ENCODE measurements at regions of chr9 and their contacts with region 1.

Region 1: GRCh38 chr9:137114610-137115391 is at the start of gene DPP7:
- DNase-seq: peak in 1 of 2 experiments; percentile 74
- H3K4me3 ChIP-seq: peak within 1 kb of the TSS; percentile 72
- H3K27ac ChIP-seq: no peak within 1 kb of the TSS
- H3K4me1 ChIP-seq: peaks cover 6% of the 10 kb centered on the region
- H3K27me3 ChIP-seq: no peaks in the 10 kb centered on the region
- CTCF ChIP-seq: no peak
- total RNA-seq, gene DPP7: 104 and 126 TPM in 2 replicates

Region 2: GRCh38 chr9:136799854-136800657 is 314.7 kb before region 1 on chr9:
- CTCF ChIA-PET with region 1: interaction called, 11 read pairs
- POLR2A ChIA-PET with region 1: no interaction called
- intact Hi-C with region 1: no loop called
- DNase-seq: peak; percentile 81 to 91
- H3K4me3 ChIP-seq: peak overlapping the region; percentile 69
- H3K27ac ChIP-seq: no peak overlapping the region
- H3K4me1 ChIP-seq: peaks cover 21% of the 10 kb centered on the region
- H3K27me3 ChIP-seq: no peaks in the 10 kb centered on the region
- CTCF ChIP-seq: no peak

Region 3: GRCh38 chr9:137046098-137046787 is 68.6 kb before region 1 on chr9 and contains the start of gene NPDC1:
- CTCF ChIA-PET with region 1: no interaction called
- POLR2A ChIA-PET with region 1: no interaction called
- intact Hi-C with region 1: loop called (anchors 5 kb)
- DNase-seq: peak; percentile 73 to 91
- H3K4me3 ChIP-seq: peak within 1 kb of the TSS; percentile 92
- H3K27ac ChIP-seq: no peak within 1 kb of the TSS
- H3K4me1 ChIP-seq: peaks cover 15% of the 10 kb centered on the region
- H3K27me3 ChIP-seq: peaks cover 6% of the 10 kb centered on the region
- CTCF ChIP-seq: peak; percentile 87
- total RNA-seq, gene NPDC1: 89.8 and 137 TPM in 2 replicates

Region 4: GRCh38 chr9:137243626-137244485 is 129.1 kb after region 1 on chr9:
- CTCF ChIA-PET with region 1: no interaction called
- POLR2A ChIA-PET with region 1: no interaction called
- intact Hi-C with region 1: no loop called
- DNase-seq: no peak
- H3K4me3 ChIP-seq: no peak overlapping the region
- H3K27ac ChIP-seq: no peak overlapping the region
- H3K4me1 ChIP-seq: peaks cover 25% of the 10 kb centered on the region
- H3K27me3 ChIP-seq: no peaks in the 10 kb centered on the region
- CTCF ChIP-seq: no peak

Region 5: GRCh38 chr9:137254624-137255447 is 140.0 kb after region 1 on chr9 and contains the start of gene NELFB:
- CTCF ChIA-PET with region 1: no interaction called
- POLR2A ChIA-PET with region 1: interaction called, 10 read pairs
- intact Hi-C with region 1: no loop called
- DNase-seq: peak; percentile 64 to 98
- H3K4me3 ChIP-seq: peak within 1 kb of the TSS; percentile 92
- H3K27ac ChIP-seq: 0 out of 2 replicates have a peak within 1 kb of the TSS, but pooled peaks have one; percentile 37
- H3K4me1 ChIP-seq: peaks cover 22% of the 10 kb centered on the region
- H3K27me3 ChIP-seq: no peaks in the 10 kb centered on the region
- CTCF ChIP-seq: no peak
- total RNA-seq, gene NELFB: 94.2 and 103 TPM in 2 replicates